ENCODE measurements at regions of chr2 and their contacts with region 1.

Region 1: GRCh38 chr2:231905026-231905425 is 21.2 kb downstream of the NPPC start:
- DNase-seq: peak; percentile 19
- ATAC-seq: no peak

Region 2: GRCh38 chr2:231925303-231926179 is 20.5 kb after region 1 on chr2:
- intact Hi-C with region 1: loop called (anchors 2 kb)
- DNase-seq: peak; percentile 92
- ATAC-seq: peak; percentile 89

Region 3: GRCh38 chr2:232260075-232260474 is 355.0 kb after region 1 on chr2:
- intact Hi-C with region 1: no loop called
- DNase-seq: no peak
- ATAC-seq: peak; percentile 29

Region 4: DNA sequence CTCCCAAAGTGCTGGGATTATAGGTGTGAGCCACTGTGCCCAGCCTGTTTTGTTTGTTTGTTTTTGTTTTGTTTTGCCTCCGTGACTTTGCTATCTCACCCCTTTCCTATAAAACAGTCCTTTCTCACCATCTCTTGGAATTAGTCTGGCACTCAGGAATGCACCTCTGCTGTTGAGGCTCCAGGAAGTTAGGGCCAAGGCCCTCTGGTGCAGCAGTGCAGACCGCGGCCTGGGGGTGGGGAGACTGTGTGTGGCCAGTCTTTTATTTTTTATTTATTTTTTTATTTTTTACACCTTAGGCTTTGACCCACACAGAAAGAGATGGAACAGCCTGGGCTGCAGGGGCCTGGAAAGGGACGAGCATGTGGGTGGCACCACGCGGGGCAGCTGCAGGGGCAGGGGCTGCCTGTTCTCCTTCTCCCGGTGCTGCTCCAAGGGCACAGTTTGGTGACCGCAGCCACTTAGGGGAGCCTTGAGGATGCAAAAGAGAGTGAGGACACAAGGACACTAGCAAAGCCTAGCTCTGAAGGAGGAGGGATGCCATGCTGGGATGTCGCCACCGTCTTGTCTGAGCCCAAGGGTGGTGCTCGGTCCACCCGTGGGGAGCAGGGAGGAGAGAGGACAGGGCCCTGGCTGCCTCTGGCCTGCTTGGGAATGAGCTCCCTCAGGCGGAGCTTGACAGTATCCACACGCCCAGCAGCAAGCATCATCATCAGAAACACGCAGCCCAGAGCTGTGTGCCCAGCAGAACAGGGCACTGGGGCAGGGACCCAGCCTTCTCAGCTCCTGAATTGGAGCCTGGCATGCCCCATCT is 531.6 kb after region 1 on chr2:
- intact Hi-C with region 1: loop called (anchors 2 kb)
- DNase-seq: no peak
- ATAC-seq: no peak

Region 5: GRCh38 chr2:232521959-232522622 is 617.1 kb after region 1 on chr2:
- intact Hi-C with region 1: loop called (anchors 5 kb)
- DNase-seq: peak; percentile 80
- ATAC-seq: peak; percentile 65

Measured in Right ventricle myocardium superior (tissue), 1 donor.